ENCODE measurements at regions of chr4 and their contacts with region 1.

Region 1: DNA sequence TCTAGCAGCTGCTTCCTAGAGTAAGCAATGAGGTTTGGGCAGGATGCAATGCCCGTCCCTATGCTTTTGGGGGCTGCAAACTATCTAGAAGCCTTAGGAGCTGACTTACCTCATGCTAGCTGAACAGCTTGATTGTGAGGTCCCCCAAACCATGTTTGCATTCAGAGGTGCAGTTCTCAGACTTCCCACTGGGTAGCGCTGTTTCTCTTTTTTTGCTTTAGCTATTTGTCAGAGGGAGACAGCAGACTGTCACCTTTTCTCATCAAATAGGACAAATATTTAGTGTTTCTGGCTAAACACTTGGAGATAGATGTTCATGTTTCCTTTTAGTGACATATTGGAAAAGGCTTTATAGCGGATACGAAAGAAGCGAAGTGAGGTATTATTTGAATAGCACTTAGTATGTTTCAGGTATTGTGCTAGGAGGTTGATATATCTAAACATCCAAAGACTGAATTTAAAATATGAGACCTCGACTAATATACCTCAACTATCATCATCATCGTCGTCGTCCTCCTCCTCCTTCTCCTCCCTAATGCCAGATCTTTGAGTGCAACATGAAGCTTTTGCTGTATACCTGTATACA is 18.7 kb upstream of the TMEM192 start:
- DNase-seq: peak; percentile 60
- CTCF ChIP-seq: peak; percentile 88

Region 2: GRCh38 chr4:165343353-165344191 is 212.2 kb after region 1 on chr4:
- in situ Hi-C with region 1: loop called (anchors 10 kb)
- DNase-seq: no peak
- CTCF ChIP-seq: no peak

Region 3: DNA sequence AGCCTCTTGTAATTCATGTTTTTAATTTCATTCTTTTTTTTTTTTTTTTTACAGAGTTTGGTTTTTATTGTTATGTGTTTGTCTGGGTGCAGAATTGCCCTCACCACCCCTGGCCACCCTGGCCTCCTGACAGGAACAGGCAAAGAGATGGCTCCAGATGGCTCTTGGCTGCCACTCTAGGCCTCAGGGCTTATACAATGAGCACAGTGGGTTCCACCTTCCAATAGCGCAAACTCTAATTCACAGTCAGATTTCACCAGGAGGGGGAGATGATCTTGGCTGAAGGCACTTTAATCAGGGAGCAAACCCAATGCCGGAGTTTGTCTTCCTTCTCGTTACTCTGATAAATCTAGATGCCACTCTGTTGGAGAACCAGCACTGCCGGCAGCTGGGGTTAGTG is 272.3 kb after region 1 on chr4:
- in situ Hi-C with region 1: no loop called
- DNase-seq: no peak
- CTCF ChIP-seq: no peak

Region 4: GRCh38 chr4:165464813-165465381 is 333.6 kb after region 1 on chr4:
- in situ Hi-C with region 1: loop called (anchors 10 kb)
- DNase-seq: peak; percentile 56
- CTCF ChIP-seq: peak; percentile 28